ENCODE measurements at regions of chr3 and their contacts with region 1.

Region 1: GRCh38 chr3:119559441-119559963 is at the start of gene CD80:
- DNase-seq: peak; percentile 92
- H3K4me3 Mint-ChIP-seq: peak within 1 kb of the TSS; percentile 80
- H3K27ac Mint-ChIP-seq: peak within 1 kb of the TSS; percentile 77
- H3K4me1 Mint-ChIP-seq: peaks cover 53% of the 10 kb centered on the region
- H3K27me3 Mint-ChIP-seq: no peaks in the 10 kb centered on the region
- total RNA-seq, gene CD80: 12.5 and 13.0 TPM in 2 replicates

Region 2: GRCh38 chr3:118884748-118885206 is 674.7 kb before region 1 on chr3:
- intact Hi-C with region 1: loop called (anchors 10 kb)
- DNase-seq: peak; percentile 92
- H3K4me3 Mint-ChIP-seq: no peak overlapping the region
- H3K27ac Mint-ChIP-seq: no peak overlapping the region
- H3K4me1 Mint-ChIP-seq: peaks cover 2% of the 10 kb centered on the region
- H3K27me3 Mint-ChIP-seq: peaks cover 19% of the 10 kb centered on the region

Region 3: DNA sequence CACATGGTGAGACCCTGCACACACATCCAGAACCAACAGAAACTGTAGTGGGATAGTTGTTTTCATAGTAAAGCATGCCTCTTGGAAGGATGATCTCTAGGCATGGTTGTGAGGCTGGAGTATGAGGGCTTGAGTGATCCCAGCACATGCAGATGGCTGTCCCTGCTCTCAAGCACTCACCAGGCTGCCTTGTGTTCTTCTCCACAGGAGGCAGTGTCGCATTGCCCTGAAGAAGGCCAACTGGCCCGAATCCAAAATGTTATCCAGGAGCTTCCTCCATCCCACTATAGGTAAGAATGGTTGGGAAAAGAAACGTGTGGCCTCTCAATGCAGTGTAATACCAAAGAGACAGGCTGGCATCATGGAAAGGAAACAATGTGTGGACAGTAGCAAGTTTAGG is 178.8 kb before region 1 on chr3:
- intact Hi-C with region 1: no loop called
- DNase-seq: no peak
- H3K4me3 Mint-ChIP-seq: no peak overlapping the region
- H3K27ac Mint-ChIP-seq: no peak overlapping the region
- H3K4me1 Mint-ChIP-seq: no peaks in the 10 kb centered on the region
- H3K27me3 Mint-ChIP-seq: no peaks in the 10 kb centered on the region

Region 4: DNA sequence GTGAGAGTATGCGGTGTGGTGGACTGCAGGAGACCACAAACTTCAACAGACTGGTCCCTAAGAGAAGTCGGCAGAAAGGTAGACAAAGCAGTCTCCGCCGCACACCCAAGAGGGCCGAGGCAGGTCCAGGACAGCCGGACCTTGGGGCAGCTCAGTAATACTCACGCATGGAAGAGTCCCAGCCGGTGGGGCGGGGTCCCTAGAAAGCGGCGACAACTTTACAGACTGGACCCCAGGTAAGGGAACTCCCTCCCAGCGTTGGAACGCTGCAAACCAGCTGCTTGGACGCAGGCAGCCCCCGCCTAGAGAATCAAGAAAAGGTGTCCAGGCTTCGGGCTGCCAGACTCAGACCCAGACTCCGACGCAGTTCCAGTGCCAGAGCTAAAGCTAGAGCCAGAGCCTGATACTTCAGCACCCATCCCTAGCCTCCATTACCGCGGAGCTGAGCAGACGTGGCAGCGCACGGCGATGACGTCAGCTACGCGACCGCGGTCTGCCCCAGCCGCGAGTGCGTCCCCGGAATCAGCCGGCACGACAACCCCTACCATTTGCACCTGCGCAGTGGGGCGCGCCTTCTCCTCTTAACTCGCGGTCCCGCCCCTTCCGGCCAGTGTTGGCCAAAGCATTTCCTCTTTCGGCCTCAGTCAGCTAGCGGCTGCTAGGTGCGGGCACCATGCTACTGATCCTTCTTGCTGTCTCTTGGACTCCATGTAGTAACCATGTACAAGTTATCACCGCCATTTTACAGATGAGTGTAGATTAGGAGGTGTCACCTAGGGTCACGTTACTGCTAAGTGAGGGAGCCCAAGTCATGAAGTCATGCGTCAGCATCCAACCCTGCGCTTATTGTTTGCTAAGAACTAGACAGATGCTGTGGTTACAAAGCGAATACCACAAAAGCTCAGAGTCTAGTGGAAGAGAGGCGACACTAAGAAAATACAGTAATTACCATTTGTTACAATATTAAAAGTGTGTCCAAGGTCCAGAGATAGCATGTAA is 96.0 kb before region 1 on chr3 and contains the start of gene TMEM39A:
- intact Hi-C with region 1: loop called (anchors 2 kb)
- DNase-seq: peak; percentile 100
- H3K4me3 Mint-ChIP-seq: peak within 1 kb of the TSS; percentile 99
- H3K27ac Mint-ChIP-seq: peak within 1 kb of the TSS; percentile 96
- H3K4me1 Mint-ChIP-seq: peaks cover 30% of the 10 kb centered on the region
- H3K27me3 Mint-ChIP-seq: peaks cover 2% of the 10 kb centered on the region
- total RNA-seq, gene TMEM39A: 44.0 and 52.2 TPM in 2 replicates

Region 5: DNA sequence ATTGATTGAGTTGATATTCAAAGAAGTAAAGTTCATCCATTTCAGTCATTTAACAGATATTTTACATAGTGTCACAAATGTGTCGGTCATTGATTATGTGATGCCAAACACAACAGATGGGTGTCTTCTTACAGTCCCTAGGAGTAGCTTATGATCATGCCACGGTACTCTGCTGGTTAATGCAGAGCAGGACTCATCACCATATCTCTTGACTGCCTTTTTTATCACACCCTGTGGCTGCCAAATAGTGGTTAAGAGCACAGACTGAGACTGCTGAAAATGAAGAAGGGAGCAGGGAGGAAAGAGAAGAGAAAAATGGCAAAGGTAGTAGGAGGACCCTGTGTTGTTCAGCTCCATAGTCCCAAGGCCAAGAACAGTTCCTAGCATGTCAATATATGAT is 73.9 kb before region 1 on chr3:
- intact Hi-C with region 1: no loop called
- DNase-seq: no peak
- H3K4me3 Mint-ChIP-seq: no peak overlapping the region
- H3K27ac Mint-ChIP-seq: no peak overlapping the region
- H3K4me1 Mint-ChIP-seq: peaks cover 13% of the 10 kb centered on the region
- H3K27me3 Mint-ChIP-seq: no peaks in the 10 kb centered on the region

Region 6: GRCh38 chr3:119498186-119498987 is 61.1 kb before region 1 on chr3 and contains the start of gene TIMMDC1:
- intact Hi-C with region 1: loop called (anchors 2 kb)
- DNase-seq: peak; percentile 99
- H3K4me3 Mint-ChIP-seq: peak within 1 kb of the TSS; percentile 99
- H3K27ac Mint-ChIP-seq: peak within 1 kb of the TSS; percentile 99
- H3K4me1 Mint-ChIP-seq: peaks cover 23% of the 10 kb centered on the region
- H3K27me3 Mint-ChIP-seq: no peaks in the 10 kb centered on the region
- total RNA-seq, gene TIMMDC1: 113 and 117 TPM in 2 replicates

Region 7: DNA sequence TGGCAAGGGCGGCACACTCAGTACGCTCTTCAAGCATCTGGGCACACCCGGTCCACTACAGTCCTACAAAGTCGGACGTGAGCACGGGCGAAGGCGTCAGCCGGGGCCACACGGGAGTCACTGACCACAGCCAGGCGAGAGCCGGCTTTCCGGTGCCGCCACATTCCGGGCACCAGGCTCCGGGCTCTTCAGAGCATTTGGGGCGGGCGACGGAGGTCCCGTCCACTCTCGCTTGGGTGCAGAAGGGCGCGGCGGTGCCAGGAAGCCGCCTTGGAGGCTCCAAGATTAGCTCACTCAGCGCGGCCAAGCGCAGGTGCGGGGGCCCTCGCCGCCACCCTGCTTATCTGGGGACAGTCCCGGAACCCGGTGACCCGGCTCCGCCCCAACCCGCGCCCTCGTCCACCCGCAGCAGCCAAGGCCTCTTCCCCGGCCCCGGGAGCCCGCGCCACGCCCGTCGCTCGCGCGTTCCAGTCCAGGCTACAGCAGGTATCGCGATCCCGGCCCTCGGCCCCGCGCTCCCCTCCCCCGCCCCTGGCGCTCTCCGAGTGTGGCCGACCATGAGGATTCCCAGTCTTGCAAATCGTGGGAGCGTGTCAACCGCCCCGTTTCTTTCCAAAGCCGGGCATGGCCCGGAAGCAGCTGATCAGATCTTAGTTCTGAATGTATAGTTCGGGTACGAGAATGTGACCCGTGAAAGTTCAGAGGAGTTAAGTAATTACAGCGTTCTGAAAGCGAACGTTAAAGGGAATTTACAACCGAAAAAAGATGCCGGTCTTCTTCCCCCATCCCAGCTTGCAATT is 20.1 kb after region 1 on chr3 and contains the start of gene ADPRH:
- intact Hi-C with region 1: loop called (anchors 1 kb)
- DNase-seq: peak; percentile 86
- H3K4me3 Mint-ChIP-seq: peak within 1 kb of the TSS; percentile 85
- H3K27ac Mint-ChIP-seq: peak within 1 kb of the TSS; percentile 93
- H3K4me1 Mint-ChIP-seq: peaks cover 25% of the 10 kb centered on the region
- H3K27me3 Mint-ChIP-seq: no peaks in the 10 kb centered on the region
- total RNA-seq, gene ADPRH: 3.6 and 4.2 TPM in 2 replicates